ENCODE measurements at regions of chr3 and their contacts with region 1.

Region 1: GRCh38 chr3:11803977-11804892 is 42.5 kb downstream of the TAMM41 start:
- DNase-seq: peak; percentile 55
- ATAC-seq: peak; percentile 82
- H3K4me3 ChIP-seq: no peak overlapping the region
- H3K27ac ChIP-seq: no peak overlapping the region
- H3K4me1 ChIP-seq: peaks cover 6% of the 10 kb centered on the region; the same call in 1 of the 2 replicates
- H3K27me3 ChIP-seq: no peaks in the 10 kb centered on the region
- CTCF ChIP-seq: peak; percentile 65
- POLR2A ChIP-seq: no peak
- RAD21 ChIP-seq: peak; percentile 67

Region 2: GRCh38 chr3:11385891-11386290 is 418.3 kb before region 1 on chr3:
- CTCF ChIA-PET with region 1: no interaction called
- POLR2A ChIA-PET with region 1: no interaction called
- dilution Hi-C with region 1: no loop called
- in situ Hi-C with region 1: loop called (anchors 10 kb)
- intact Hi-C with region 1: no loop called
- DNase-seq: peak; percentile 89
- ATAC-seq: peak; percentile 17; the same call in 1 of the 2 replicates
- H3K4me3 ChIP-seq: no peak overlapping the region
- H3K27ac ChIP-seq: no peak overlapping the region
- H3K4me1 ChIP-seq: peaks cover 3% of the 10 kb centered on the region
- H3K27me3 ChIP-seq: no peaks in the 10 kb centered on the region
- CTCF ChIP-seq: no peak
- POLR2A ChIP-seq: no peak
- RAD21 ChIP-seq: no peak

Region 3: DNA sequence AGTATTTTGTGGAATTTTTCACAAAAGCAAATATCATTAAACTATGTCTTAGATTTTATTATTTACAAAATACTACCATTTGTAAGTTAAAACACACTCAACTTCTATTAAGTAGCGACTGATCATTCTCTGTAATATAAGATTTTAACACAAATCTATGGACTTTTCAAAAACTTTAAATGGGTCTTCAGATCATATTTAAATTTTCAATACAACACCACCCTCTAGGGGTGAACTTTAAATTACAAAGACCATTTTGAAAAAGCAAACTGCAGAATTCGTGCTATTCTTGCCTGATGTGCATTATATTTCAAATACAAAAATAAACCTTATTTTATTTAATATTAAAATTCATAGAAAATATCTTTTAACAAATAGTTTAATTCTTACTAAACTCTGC is 152.3 kb before region 1 on chr3:
- CTCF ChIA-PET with region 1: no interaction called
- POLR2A ChIA-PET with region 1: no interaction called
- dilution Hi-C with region 1: no loop called
- in situ Hi-C with region 1: loop called (anchors 5 kb)
- intact Hi-C with region 1: loop called (anchors 2 kb)
- DNase-seq: peak; percentile 63
- ATAC-seq: peak; percentile 70
- H3K4me3 ChIP-seq: no peak overlapping the region
- H3K27ac ChIP-seq: no peak overlapping the region; the same call in 1 of the 2 replicates
- H3K4me1 ChIP-seq: no peaks in the 10 kb centered on the region
- H3K27me3 ChIP-seq: no peaks in the 10 kb centered on the region
- CTCF ChIP-seq: peak; percentile 55
- POLR2A ChIP-seq: no peak
- RAD21 ChIP-seq: peak; percentile 58

Region 4: GRCh38 chr3:11719406-11720230 is 84.6 kb before region 1 on chr3:
- CTCF ChIA-PET with region 1: interaction called, 6 read pairs
- POLR2A ChIA-PET with region 1: no interaction called
- dilution Hi-C with region 1: no loop called
- in situ Hi-C with region 1: no loop called
- intact Hi-C with region 1: loop called (anchors 1 kb)
- DNase-seq: peak; percentile 28
- ATAC-seq: peak; percentile 68
- H3K4me3 ChIP-seq: peak overlapping the region; percentile 76
- H3K27ac ChIP-seq: peak overlapping the region; percentile 83
- H3K4me1 ChIP-seq: no peaks in the 10 kb centered on the region; the same call in none of the 2 replicates
- H3K27me3 ChIP-seq: peaks cover 5% of the 10 kb centered on the region
- CTCF ChIP-seq: no peak
- POLR2A ChIP-seq: no peak
- RAD21 ChIP-seq: no peak

Region 5: GRCh38 chr3:11774294-11774877 is 29.8 kb before region 1 on chr3:
- CTCF ChIA-PET with region 1: no interaction called
- POLR2A ChIA-PET with region 1: no interaction called
- dilution Hi-C with region 1: no loop called
- in situ Hi-C with region 1: no loop called
- intact Hi-C with region 1: loop called (anchors 2 kb)
- DNase-seq: peak; percentile 45
- ATAC-seq: peak; percentile 77
- H3K4me3 ChIP-seq: no peak overlapping the region
- H3K27ac ChIP-seq: no peak overlapping the region
- H3K4me1 ChIP-seq: peaks cover 4% of the 10 kb centered on the region
- H3K27me3 ChIP-seq: peaks cover 2% of the 10 kb centered on the region; the same call in 1 of the 2 replicates
- CTCF ChIP-seq: peak; percentile 50
- POLR2A ChIP-seq: no peak
- RAD21 ChIP-seq: peak; percentile 30; the same call in 1 of the 2 replicates

Region 6: GRCh38 chr3:12131351-12132090 is 327.3 kb after region 1 on chr3:
- CTCF ChIA-PET with region 1: no interaction called
- POLR2A ChIA-PET with region 1: no interaction called
- dilution Hi-C with region 1: no loop called
- in situ Hi-C with region 1: no loop called
- intact Hi-C with region 1: no loop called
- DNase-seq: no peak
- ATAC-seq: no peak
- H3K4me3 ChIP-seq: no peak overlapping the region
- H3K27ac ChIP-seq: no peak overlapping the region
- H3K4me1 ChIP-seq: no peaks in the 10 kb centered on the region
- H3K27me3 ChIP-seq: peaks cover 37% of the 10 kb centered on the region
- CTCF ChIP-seq: no peak
- POLR2A ChIP-seq: no peak
- RAD21 ChIP-seq: no peak